ENCODE measurements at regions of chr9 and their contacts with region 1.

Region 1: GRCh38 chr9:99807276-99807852 is 14.3 kb upstream of the NR4A3 start:
- DNase-seq: peak; percentile 55 to 83
- H3K4me3 ChIP-seq: no peak overlapping the region
- H3K4me3 Mint-ChIP-seq: no peak overlapping the region
- H3K27ac Mint-ChIP-seq: peak overlapping the region; percentile 15
- H3K4me1 ChIP-seq: no peaks in the 10 kb centered on the region; the same call in 1 of the 2 replicates
- H3K4me1 Mint-ChIP-seq: peaks cover 19% of the 10 kb centered on the region
- H3K27me3 ChIP-seq: no peaks in the 10 kb centered on the region
- H3K27me3 Mint-ChIP-seq: no peaks in the 10 kb centered on the region
- CTCF ChIP-seq: peak; percentile 79 to 81

Region 2: DNA sequence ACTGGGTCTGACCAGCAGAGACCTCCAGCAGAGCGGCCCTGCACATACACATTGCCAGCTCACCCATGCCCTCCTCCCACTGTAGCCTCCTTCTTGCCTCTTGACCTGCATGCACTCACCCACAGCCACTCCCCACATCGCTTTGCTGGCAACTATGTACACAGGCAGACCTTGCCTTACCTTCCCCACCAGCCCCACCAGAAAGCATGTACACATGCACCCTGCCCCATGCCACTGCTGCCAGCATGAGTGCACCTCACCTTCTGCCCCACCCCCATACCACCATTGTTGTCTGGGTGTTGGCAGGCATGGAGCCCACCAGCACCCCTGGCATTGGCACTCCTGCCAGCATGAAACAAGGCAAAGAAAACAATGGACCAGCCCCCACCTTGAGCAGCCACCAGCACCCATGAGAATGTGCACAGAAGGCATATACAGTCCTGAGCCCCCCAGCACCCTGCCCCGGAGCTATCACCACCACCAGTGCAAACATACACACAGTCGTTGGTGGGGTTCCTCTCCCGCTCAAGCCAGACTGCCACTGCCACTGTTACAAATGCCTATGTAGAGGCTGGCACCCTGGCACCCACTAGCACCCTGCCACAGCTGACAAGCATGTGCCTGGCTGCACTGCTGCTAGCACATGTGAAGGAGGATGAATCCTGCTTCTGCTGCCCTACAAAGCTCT is 157.0 kb before region 1 on chr9:
- CTCF ChIA-PET with region 1: no interaction called
- POLR2A ChIA-PET with region 1: no interaction called
- intact Hi-C with region 1: no loop called
- DNase-seq: no peak
- H3K4me3 ChIP-seq: no peak overlapping the region
- H3K4me3 Mint-ChIP-seq: no peak overlapping the region
- H3K27ac Mint-ChIP-seq: no peak overlapping the region
- H3K4me1 ChIP-seq: no peaks in the 10 kb centered on the region
- H3K4me1 Mint-ChIP-seq: no peaks in the 10 kb centered on the region
- H3K27me3 ChIP-seq: no peaks in the 10 kb centered on the region
- H3K27me3 Mint-ChIP-seq: peaks cover 12% of the 10 kb centered on the region
- CTCF ChIP-seq: no peak

Region 3: DNA sequence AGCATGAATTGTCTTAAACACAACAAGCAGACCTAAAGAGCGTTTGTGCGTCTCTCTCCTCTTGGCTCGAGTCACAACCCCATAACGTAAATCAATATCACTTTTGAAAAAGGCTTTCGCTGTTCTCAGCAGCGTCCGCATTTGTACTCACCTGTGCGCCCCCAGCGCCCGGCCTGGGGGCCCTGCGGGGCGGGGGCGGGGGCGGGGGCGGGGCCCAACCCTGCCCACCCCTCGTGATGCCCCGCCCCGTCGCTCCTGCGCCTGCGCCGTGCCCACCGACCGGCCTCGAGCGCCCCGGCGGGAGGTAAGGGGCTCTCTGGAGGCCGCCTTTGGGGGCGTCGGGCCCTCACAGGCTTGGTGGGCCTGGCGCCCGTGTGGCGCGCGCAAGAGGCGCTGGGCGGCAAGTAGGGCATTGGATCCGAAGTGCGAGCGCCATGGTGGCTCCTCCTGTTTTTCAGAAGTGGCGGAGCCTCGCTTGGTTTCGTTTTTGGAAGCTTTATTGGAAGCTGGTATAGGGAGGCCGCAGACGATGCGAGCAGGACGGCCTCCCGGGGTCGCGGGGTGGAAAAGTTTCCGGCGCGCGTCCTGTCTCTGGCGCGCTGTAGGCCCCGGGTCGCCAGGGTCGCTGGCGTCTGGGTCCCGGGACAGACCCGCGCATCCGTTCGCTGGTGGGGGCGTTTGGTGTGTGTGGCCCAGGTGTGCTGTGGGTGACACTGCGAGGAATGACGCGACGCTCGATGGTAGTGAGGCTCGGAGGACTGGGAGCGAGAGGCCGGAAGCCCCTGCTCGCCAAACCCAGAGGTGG is 99.2 kb after region 1 on chr9 and contains the start of gene STX17:
- CTCF ChIA-PET with region 1: no interaction called
- POLR2A ChIA-PET with region 1: no interaction called
- intact Hi-C with region 1: loop called (anchors 5 kb)
- DNase-seq: peak; percentile 80 to 88
- H3K4me3 ChIP-seq: peak within 1 kb of the TSS; percentile 89
- H3K4me3 Mint-ChIP-seq: peak within 1 kb of the TSS; percentile 76
- H3K27ac Mint-ChIP-seq: peak within 1 kb of the TSS; percentile 70
- H3K4me1 ChIP-seq: peaks cover 10% of the 10 kb centered on the region
- H3K4me1 Mint-ChIP-seq: peaks cover 18% of the 10 kb centered on the region
- H3K27me3 ChIP-seq: no peaks in the 10 kb centered on the region
- H3K27me3 Mint-ChIP-seq: peaks cover 2% of the 10 kb centered on the region
- CTCF ChIP-seq: no peak
- total RNA-seq, gene STX17: 40.2 and 41.1 TPM in 2 replicates

Region 4: DNA sequence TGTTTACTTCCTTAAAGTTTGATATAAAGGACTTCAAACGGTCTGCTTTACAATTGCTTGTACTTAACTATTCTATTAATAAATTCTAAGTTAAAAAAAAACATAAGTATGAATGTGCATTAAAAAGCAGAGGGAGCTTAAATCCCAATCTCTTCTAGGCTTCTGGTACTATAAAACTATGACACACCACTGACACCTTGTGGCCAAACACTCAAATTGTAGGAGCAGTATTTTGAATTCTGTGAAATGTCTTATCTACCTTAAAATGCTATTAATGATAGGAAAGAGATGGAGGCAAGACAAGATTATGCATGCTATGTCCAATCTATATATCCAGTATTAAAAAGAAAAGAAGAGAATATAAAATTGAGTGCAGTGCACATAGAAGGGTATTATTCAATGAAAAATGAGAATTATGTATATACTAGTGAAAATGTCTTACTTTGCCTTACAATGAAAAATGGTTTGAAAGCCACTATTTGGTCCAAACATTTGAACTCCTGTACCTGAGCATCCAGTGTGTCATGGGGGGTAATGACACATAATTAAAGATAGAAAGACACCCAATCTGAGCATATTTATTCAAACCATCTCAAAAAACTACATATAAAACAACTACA is 203.8 kb after region 1 on chr9:
- CTCF ChIA-PET with region 1: no interaction called
- POLR2A ChIA-PET with region 1: no interaction called
- intact Hi-C with region 1: loop called (anchors 1 kb)
- DNase-seq: peak in 1 of 2 experiments; percentile 47
- H3K4me3 ChIP-seq: no peak overlapping the region
- H3K4me3 Mint-ChIP-seq: no peak overlapping the region
- H3K27ac Mint-ChIP-seq: no peak overlapping the region
- H3K4me1 ChIP-seq: no peaks in the 10 kb centered on the region
- H3K4me1 Mint-ChIP-seq: no peaks in the 10 kb centered on the region
- H3K27me3 ChIP-seq: no peaks in the 10 kb centered on the region
- H3K27me3 Mint-ChIP-seq: no peaks in the 10 kb centered on the region
- CTCF ChIP-seq: peak; percentile 39 to 51